BJ (cell line): ENCODE measurements at regions of chr2 and their contacts with region 1.

Region 1: GRCh38 chr2:119702918-119703401 is 24.0 kb downstream of the TMEM177 start:
- DNase-seq: no peak
- H3K4me3 ChIP-seq: no peak overlapping the region
- H3K27me3 ChIP-seq: peaks cover 1% of the 10 kb centered on the region
- CTCF ChIP-seq: peak; percentile 98

Region 2: DNA sequence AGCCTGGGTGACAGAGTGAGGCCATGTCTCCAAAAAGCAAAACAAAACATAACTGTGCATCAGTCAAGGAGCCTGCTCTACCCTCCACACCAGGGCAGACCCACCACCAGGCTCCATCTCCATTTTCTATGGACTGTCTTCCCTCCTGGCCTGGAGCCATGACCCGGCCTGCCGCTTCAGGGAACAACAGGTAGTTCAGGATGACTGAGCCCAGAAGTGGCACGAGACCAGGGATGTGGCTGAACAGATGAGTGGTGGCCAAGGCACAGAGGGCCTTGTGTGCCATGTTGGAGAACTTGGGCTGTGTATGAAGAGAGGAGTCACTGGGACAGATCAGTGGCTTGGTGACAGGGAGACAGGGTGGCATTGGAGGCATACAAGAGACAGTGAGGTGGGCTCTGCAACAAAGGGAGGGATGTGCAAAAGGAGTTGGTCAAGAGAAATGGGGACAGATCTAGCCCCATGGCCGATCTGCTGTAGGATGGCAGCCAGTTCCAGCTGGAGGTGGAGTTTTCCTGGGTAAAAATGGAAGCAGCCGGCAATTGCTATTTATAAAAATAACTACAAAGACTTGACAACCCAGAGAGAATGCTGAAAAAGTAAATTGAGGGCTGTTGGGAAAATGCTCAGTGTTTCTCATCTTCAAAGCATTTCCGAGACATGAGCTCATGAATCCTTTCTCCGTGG is 11.0 kb after region 1 on chr2:
- CTCF ChIA-PET with region 1: interaction called, 40 read pairs
- POLR2A ChIA-PET with region 1: no interaction called
- DNase-seq: no peak
- H3K4me3 ChIP-seq: no peak overlapping the region
- H3K27me3 ChIP-seq: peaks cover 2% of the 10 kb centered on the region; the same call in 1 of the 2 replicates
- CTCF ChIP-seq: no peak

Region 3: DNA sequence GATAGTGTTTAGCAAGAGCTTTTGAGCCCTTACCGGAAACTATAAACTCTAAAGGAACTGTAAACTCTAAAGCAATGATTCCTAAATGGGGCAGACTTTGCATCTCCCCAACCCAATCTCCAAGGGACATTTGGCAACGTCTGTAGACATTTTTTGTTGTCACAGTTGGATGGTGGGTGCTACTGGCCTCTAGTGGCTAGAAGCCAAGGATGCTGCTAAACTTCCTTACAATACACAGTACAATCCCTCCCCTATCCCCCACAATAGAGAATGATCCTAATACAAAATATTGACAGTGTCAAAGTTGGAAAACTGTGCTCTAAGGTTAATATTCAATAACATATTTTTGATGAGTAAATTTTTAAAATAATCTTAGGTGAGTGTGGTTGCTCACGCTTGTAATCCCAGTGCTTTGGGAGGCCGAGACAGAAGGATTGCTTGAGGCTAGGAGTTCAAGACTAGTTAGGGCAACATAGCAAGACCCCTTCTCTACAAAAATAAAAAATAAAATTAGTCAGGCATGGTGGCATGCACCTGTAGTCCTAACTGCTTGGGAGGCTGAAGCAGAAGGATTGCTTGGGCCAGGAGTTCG is 123.5 kb after region 1 on chr2:
- CTCF ChIA-PET with region 1: interaction called, 20 read pairs
- POLR2A ChIA-PET with region 1: interaction called, 10 read pairs
- DNase-seq: no peak
- H3K4me3 ChIP-seq: no peak overlapping the region
- H3K27me3 ChIP-seq: no peaks in the 10 kb centered on the region
- CTCF ChIP-seq: peak; percentile 64